ENCODE measurements at regions of chr6 and their contacts with region 1.

Region 1: GRCh38 chr6:70547313-70547712 is 19.4 kb upstream of the SDHAF4 start:
- DNase-seq: no peak

Region 2: DNA sequence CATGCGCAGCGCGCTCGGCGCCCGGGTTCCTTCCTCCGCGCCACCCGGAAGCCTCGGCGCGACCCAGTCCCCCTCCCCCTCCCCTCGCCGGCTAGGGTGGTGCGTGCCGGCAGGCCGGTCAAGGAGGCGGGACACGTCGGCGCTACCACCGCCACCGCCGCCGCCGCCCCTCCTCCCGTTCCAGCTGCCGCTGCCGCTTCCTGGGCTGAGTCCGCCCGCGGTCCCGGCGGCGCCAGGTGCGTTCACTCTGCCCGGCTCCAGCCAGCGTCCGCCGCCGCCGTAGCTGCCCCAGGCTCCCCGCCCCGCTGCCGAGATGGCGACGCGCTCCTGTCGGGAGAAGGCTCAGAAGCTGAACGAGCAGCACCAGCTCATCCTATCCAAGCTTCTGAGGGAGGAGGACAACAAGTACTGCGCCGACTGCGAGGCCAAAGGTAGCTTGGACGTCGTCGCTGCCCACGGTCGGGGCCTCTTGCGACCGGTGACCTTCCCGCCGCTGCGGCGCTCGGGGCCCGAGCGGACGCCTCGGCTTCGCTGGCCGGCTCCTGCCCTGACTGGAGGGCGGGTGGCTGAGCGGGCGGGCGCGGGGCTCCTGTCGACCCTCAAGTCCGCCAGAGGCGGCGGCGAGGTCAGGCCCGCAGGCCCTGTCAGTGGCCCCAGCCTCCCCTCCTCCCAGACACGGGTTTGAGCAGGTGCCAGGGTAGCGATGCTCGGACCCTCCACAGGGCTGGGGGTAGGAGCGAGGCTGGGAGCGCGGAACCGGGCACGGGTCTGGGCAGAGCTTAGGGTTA is 120.6 kb after region 1 on chr6 and contains the start of gene SMAP1:
- intact Hi-C with region 1: loop called (anchors 5 kb)
- DNase-seq: peak; percentile 97
- total RNA-seq, gene SMAP1: 32.5 TPM

Region 3: GRCh38 chr6:70686548-70687133 is 139.3 kb after region 1 on chr6:
- intact Hi-C with region 1: loop called (anchors 5 kb)
- DNase-seq: no peak

Region 4: DNA sequence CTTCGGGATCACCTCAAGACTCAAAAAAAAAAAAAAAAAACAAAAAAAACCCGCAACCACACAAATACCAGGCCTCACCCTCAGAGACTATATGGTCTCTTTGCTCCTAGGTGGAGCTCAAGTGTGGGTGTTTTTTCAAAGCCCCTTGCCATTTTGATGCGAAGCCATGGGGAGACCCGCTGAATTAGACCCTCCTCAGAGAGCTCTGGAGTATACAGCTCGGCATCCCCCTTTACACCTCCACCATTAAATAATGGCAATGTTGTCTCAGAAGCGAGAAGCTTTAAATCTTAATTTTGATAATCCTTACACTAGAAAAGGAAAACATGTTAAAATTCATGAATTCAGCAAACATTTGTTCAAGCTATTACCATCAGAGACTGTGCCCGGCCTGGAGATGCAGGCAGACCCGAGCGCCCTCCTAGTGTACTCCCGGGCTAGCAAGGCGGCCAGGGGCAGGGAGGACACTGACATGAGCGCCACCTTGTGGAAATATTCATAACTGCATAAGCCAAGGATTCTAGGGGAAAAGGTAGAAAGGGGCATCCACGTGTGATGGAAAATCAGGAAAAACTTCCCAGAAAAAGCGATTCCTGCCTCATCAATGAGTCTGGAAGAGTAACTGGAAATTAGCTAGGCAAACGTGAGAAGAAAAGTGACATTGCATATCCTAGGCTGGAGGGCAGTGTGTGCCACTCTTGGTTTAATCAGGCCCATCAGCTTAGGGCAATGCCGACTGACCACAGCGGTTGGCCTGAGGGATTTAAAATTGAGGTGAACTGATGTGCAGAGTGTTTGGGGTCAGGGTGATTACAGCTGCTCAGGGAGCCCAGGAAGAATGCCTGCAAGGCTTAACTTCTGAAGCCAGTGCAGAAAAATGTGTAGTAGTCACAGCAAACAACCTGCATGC is 337.0 kb after region 1 on chr6:
- intact Hi-C with region 1: loop called (anchors 5 kb)
- DNase-seq: no peak

Region 5: GRCh38 chr6:70955441-70956190 is 408.3 kb after region 1 on chr6:
- intact Hi-C with region 1: loop called (anchors 10 kb)
- DNase-seq: peak; percentile 91